Heart left ventricle (tissue), 16 donors: ENCODE measurements at regions of chr7 and their contacts with region 1.

Region 1: GRCh38 chr7:4725014-4725849 is 43.1 kb downstream of the FOXK1 start:
- DNase-seq: peak; percentile 81 to 87 (median 84)
- ATAC-seq: peak; percentile 71 to 87 (median 82)
- H3K4me3 ChIP-seq: peak overlapping the region; percentile 16 to 69 (median 52)
- H3K27ac ChIP-seq: peak overlapping the region; percentile 79 to 96 (median 90)
- H3K4me1 ChIP-seq: peaks cover 0 to 75% (median 48%) of the 10 kb centered on the region in 12 donors
- H3K27me3 ChIP-seq: no peaks in the 10 kb centered on the region
- CTCF ChIP-seq: peak in 1 of 12 donors; percentile 10
- POLR2A ChIP-seq: peak in 1 of 2 donors; percentile 33

Region 2: GRCh38 chr7:4689668-4690067 is 35.6 kb before region 1 on chr7:
- intact Hi-C with region 1: loop called in 4 of 10 experiments (anchors 5 kb)
- DNase-seq: no peak
- ATAC-seq: peak in 1 of 4 donors; percentile 16
- H3K4me3 ChIP-seq: no peak overlapping the region
- H3K27ac ChIP-seq: no peak overlapping the region
- H3K4me1 ChIP-seq: peaks cover 5 to 95% (median 63%) of the 10 kb centered on the region in 12 donors
- H3K27me3 ChIP-seq: no peaks in the 10 kb centered on the region
- CTCF ChIP-seq: no peak
- POLR2A ChIP-seq: no peak

Region 3: DNA sequence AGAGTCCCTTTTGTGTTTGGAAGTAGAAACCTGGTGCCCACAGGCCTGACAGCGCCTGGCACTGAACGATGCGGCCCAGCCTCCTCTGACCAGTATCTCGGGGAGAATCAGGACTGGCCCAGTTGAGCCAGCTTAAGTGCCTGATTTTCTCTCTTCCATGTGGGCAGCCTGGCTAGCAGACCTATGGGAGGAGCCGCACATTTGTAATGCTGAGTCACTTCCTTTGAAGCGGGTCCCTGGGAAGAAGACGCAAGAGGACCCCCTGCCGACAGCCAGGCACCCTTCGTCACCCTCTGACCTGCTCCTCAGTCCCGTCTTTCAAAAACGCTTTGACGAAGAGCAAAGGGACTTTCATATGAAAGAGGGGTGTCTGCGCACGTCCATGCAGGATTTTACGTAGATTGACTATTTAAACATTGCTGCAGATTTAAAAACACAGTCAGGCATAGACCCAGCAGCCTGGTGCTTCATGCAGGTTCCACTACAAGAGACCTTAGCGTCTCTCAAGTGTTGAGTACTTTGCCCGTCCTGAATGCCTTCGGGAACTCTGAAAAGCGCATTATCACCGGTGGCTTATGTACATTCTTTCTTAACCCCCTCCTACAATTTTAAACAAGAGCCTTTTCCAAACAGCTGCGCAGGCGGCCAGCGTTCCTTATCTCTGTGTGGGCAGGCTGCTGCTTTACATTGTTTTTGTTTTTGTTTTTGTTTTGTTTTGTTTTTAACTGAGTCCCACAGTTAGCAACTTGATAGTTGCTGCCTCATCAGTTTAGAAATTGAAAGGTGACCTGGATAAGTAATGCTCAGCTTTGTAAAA is 13.7 kb after region 1 on chr7:
- intact Hi-C with region 1: loop called in 2 of 10 experiments (anchors 2 kb)
- DNase-seq: peak in 3 of 5 donors; percentile 51 to 73 (median 60)
- ATAC-seq: peak in 3 of 4 donors; percentile 60 to 69 (median 68)
- H3K4me3 ChIP-seq: peak overlapping the region in 11 of 12 donors; percentile 16 to 46 (median 37)
- H3K27ac ChIP-seq: peak overlapping the region; percentile 31 to 86 (median 77)
- H3K4me1 ChIP-seq: peaks cover 0 to 58% (median 36%) of the 10 kb centered on the region in 12 donors
- H3K27me3 ChIP-seq: no peaks in the 10 kb centered on the region
- CTCF ChIP-seq: no peak
- POLR2A ChIP-seq: no peak

Region 4: DNA sequence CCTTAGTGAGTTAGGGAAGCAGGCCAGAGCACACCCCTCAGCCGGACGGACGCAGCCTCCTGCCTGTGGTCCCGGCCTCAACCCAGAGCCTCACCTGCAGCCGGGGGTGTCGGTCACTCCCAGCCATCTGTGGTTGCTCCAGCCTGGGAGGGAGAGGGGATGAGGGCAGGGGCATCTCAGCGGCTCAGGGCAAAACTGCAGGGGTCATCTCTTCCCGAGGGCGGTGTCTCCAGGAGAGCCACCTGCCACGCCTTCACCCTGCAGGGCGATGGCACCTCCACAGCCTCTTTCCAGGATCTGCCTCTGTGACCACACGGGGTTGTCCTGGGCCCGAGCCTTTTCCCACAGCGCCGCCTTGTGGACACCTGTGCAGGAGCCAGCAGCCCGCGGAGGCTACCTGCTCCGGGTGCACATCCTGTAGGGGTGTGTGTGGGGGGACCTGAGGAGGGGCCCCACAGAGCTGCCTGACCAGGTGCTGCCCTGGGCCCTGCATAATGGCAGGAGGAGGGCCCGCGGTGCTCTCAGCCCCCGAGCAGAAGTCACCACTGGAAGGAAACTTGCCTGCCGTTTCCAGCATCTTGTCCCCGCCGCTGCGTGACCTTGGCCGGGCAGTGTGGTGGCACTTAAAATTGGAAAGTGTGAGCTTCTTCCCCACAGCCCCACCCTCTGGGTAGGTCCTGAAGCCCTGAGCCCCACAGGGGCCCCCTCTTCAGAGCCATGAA is 28.6 kb after region 1 on chr7:
- intact Hi-C with region 1: no loop called
- DNase-seq: peak; percentile 73 to 93 (median 80)
- ATAC-seq: peak; percentile 76 to 86 (median 82)
- H3K4me3 ChIP-seq: no peak overlapping the region
- H3K27ac ChIP-seq: no peak overlapping the region
- H3K4me1 ChIP-seq: peaks cover 0 to 25% (median 8%) of the 10 kb centered on the region in 12 donors
- H3K27me3 ChIP-seq: no peaks in the 10 kb centered on the region
- CTCF ChIP-seq: peak; percentile 76 to 91 (median 85)
- POLR2A ChIP-seq: no peak